ENCODE measurements at regions of chr10 and their contacts with region 1.

Region 1: DNA sequence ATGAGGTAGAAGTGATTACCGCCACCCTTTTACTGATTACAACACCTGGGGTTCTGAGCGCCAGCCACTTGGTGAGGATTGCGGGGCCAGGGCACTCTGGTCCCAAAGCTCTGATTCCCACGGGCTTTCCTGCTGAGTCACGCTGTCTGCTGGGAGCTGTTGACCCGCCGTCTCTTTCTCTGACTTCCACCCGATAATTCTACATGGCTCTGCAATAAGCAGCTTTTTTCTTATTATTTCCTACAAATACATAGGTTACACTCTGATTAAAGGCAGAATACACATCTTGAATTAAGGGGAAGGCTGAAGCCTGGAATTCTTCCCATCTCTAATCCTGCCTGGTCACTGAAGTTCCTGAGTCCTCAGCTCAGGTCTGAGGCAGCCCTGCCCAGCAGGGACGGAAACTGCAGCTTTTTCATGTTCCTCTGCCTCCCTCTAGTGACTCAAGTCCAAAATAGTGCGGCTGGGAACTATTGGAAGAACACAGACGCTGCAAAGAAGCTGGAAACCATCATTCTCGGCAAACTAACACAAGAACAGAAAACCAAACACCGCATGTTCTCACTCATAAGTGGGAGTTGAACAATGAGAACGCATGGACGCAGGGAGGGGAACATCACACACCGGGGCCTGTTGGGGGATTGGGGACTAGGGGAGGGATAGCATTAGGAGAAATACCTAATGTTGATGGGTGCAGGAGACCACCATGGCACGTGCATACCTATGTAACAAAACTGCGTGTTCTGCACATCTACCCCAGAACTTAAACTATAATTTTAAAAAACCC is 178.3 kb downstream of the PRKCQ start:
- DNase-seq: peak; percentile 85
- ATAC-seq: peak; percentile 88
- H3K4me3 ChIP-seq: peak overlapping the region in 2 of 5 experiments; percentile 5 to 12
- H3K4me3 Mint-ChIP-seq: peak overlapping the region; percentile 75
- H3K27ac ChIP-seq: no peak overlapping the region
- H3K27ac Mint-ChIP-seq: peak overlapping the region; percentile 10
- H3K4me1 ChIP-seq: peaks cover 26% of the 10 kb centered on the region in 2 donors
- H3K4me1 Mint-ChIP-seq: peaks cover 33% of the 10 kb centered on the region
- H3K27me3 ChIP-seq: peaks cover 0 to 4% (median 2%) of the 10 kb centered on the region in 4 experiments
- H3K27me3 Mint-ChIP-seq: peaks cover 22% of the 10 kb centered on the region
- CTCF ChIP-seq: peak; percentile 82

Region 2: DNA sequence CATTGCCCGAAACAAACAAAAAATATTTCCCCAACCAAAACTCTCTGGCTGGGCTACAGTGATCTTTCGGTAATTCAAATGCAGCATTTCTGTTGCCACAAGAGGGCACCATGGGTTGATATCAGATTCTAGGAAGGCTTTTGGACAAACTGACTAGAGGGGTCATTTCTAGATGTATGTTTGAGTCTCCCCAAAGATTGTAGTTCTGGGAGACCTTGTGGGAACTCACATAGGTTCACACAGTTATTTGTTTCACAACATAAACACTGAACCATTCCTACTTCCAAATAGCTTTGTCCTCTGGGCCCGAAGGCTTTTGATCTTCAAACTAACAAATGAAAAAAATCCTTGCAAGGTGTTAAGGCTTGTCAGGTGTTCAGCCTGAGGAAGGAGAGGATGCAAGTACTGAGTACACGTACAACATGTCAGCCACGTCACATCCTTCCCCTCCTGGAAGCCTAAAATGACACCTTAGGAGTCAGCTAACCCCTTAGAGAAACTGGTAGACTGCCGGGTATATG is 387.5 kb before region 1 on chr10:
- CTCF ChIA-PET with region 1: interaction called, 18 read pairs
- POLR2A ChIA-PET with region 1: no interaction called
- intact Hi-C with region 1: loop called (anchors 1 kb)
- DNase-seq: peak; percentile 79
- ATAC-seq: peak; percentile 79
- H3K4me3 ChIP-seq: no peak overlapping the region
- H3K4me3 Mint-ChIP-seq: no peak overlapping the region
- H3K27ac ChIP-seq: peak overlapping the region; percentile 34 to 57
- H3K27ac Mint-ChIP-seq: peak overlapping the region; percentile 67
- H3K4me1 ChIP-seq: peaks cover 4 to 9% of the 10 kb centered on the region in 2 donors
- H3K4me1 Mint-ChIP-seq: peaks cover 10% of the 10 kb centered on the region
- H3K27me3 ChIP-seq: no peaks in the 10 kb centered on the region
- H3K27me3 Mint-ChIP-seq: no peaks in the 10 kb centered on the region
- CTCF ChIP-seq: peak; percentile 86

Region 3: GRCh38 chr10:6108603-6109443 is 292.9 kb before region 1 on chr10:
- CTCF ChIA-PET with region 1: interaction called, 132 read pairs
- POLR2A ChIA-PET with region 1: no interaction called
- intact Hi-C with region 1: loop called (anchors 1 kb)
- DNase-seq: peak; percentile 72
- ATAC-seq: peak; percentile 80
- H3K4me3 ChIP-seq: no peak overlapping the region
- H3K4me3 Mint-ChIP-seq: no peak overlapping the region
- H3K27ac ChIP-seq: no peak overlapping the region
- H3K27ac Mint-ChIP-seq: no peak overlapping the region
- H3K4me1 ChIP-seq: peaks cover 7 to 9% of the 10 kb centered on the region in 2 donors
- H3K4me1 Mint-ChIP-seq: peaks cover 12% of the 10 kb centered on the region
- H3K27me3 ChIP-seq: no peaks in the 10 kb centered on the region
- H3K27me3 Mint-ChIP-seq: no peaks in the 10 kb centered on the region
- CTCF ChIP-seq: peak; percentile 87

Region 4: DNA sequence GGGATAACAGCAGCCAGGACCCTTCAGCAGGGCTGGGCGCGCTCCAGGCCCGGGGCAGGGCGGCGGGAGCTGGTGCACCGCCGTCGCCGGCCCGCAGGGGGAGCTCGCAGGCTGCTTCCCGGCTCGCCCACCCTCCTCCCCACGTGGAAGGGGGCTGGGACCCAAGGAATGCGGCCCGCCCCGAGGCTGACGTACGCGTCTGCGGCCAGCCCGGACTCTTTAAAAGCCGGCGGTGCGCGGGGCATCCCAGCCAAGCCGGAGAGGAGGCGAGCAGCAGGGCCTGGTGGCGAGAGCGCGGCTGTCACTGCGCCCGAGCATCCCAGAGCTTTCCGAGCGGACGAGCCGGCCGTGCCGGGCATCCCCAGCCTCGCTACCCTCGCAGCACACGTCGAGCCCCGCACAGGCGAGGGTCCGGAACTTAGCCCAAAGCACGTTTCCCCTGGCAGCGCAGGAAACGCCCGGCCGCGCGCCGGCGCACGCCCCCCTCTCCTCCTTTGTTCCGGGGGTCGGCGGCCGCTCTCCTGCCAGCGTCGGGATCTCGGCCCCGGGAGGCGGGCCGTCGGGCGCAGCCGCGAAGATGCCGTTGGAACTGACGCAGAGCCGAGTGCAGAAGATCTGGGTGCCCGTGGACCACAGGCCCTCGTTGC is 198.9 kb before region 1 on chr10 and contains the start of gene PFKFB3:
- CTCF ChIA-PET with region 1: interaction called, 325 read pairs
- POLR2A ChIA-PET with region 1: interaction called, 72 read pairs
- intact Hi-C with region 1: loop called (anchors 1 kb)
- DNase-seq: peak; percentile 90
- ATAC-seq: peak; percentile 76
- H3K4me3 ChIP-seq: peak within 1 kb of the TSS; percentile 62 to 75 (median 74)
- H3K4me3 Mint-ChIP-seq: peak within 1 kb of the TSS; percentile 97
- H3K27ac ChIP-seq: peak within 1 kb of the TSS; percentile 24 to 58
- H3K27ac Mint-ChIP-seq: peak within 1 kb of the TSS; percentile 86
- H3K4me1 ChIP-seq: peaks cover 13 to 29% of the 10 kb centered on the region in 2 donors
- H3K4me1 Mint-ChIP-seq: peaks cover 26% of the 10 kb centered on the region
- H3K27me3 ChIP-seq: no peaks in the 10 kb centered on the region
- H3K27me3 Mint-ChIP-seq: no peaks in the 10 kb centered on the region
- CTCF ChIP-seq: peak; percentile 91
- total RNA-seq, gene PFKFB3: 239 and 251 TPM in 2 replicates

Region 5: GRCh38 chr10:6244510-6244909 is 157.2 kb before region 1 on chr10:
- CTCF ChIA-PET with region 1: interaction called, 10 read pairs
- POLR2A ChIA-PET with region 1: no interaction called
- intact Hi-C with region 1: no loop called
- DNase-seq: no peak
- ATAC-seq: no peak
- H3K4me3 ChIP-seq: no peak overlapping the region
- H3K4me3 Mint-ChIP-seq: no peak overlapping the region
- H3K27ac ChIP-seq: no peak overlapping the region
- H3K27ac Mint-ChIP-seq: no peak overlapping the region
- H3K4me1 ChIP-seq: no peaks in the 10 kb centered on the region
- H3K4me1 Mint-ChIP-seq: no peaks in the 10 kb centered on the region
- H3K27me3 ChIP-seq: no peaks in the 10 kb centered on the region
- H3K27me3 Mint-ChIP-seq: no peaks in the 10 kb centered on the region
- CTCF ChIP-seq: no peak

Region 6: GRCh38 chr10:6313107-6313895 is 88.5 kb before region 1 on chr10:
- CTCF ChIA-PET with region 1: interaction called, 15 read pairs
- POLR2A ChIA-PET with region 1: interaction called, 3 read pairs
- intact Hi-C with region 1: no loop called
- DNase-seq: no peak
- ATAC-seq: no peak
- H3K4me3 ChIP-seq: no peak overlapping the region
- H3K4me3 Mint-ChIP-seq: no peak overlapping the region
- H3K27ac ChIP-seq: no peak overlapping the region
- H3K27ac Mint-ChIP-seq: no peak overlapping the region
- H3K4me1 ChIP-seq: peaks cover 7 to 17% of the 10 kb centered on the region in 2 donors
- H3K4me1 Mint-ChIP-seq: peaks cover 19% of the 10 kb centered on the region
- H3K27me3 ChIP-seq: no peaks in the 10 kb centered on the region
- H3K27me3 Mint-ChIP-seq: no peaks in the 10 kb centered on the region
- CTCF ChIP-seq: no peak

Region 7: DNA sequence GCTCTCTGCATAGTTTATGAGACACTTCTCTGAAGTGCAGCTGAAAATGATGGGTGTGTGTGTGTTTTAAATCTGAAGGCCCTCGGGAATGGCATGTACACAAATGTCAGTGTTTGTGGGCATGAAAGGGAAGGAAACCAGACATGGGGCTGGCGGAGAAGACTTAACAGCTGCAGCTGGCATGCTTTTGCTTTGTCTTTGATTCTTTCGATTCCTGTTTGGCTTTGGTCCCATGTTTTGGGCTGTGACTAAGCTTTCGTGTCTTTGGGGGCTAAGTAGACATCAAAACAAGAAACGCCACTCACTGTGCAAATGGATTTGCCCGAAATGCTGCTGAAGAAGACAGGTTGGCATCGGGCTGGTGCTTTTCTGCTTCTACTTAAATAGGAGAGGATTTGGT is 19.7 kb before region 1 on chr10:
- CTCF ChIA-PET with region 1: interaction called, 139 read pairs
- POLR2A ChIA-PET with region 1: interaction called, 3 read pairs
- intact Hi-C with region 1: loop called (anchors 1 kb)
- DNase-seq: peak; percentile 69
- ATAC-seq: peak; percentile 95
- H3K4me3 ChIP-seq: peak overlapping the region in 2 of 5 experiments; percentile 6 to 24
- H3K4me3 Mint-ChIP-seq: peak overlapping the region; percentile 86
- H3K27ac ChIP-seq: no peak overlapping the region
- H3K27ac Mint-ChIP-seq: peak overlapping the region; percentile 83
- H3K4me1 ChIP-seq: peaks cover 16 to 21% of the 10 kb centered on the region in 2 donors
- H3K4me1 Mint-ChIP-seq: peaks cover 34% of the 10 kb centered on the region
- H3K27me3 ChIP-seq: no peaks in the 10 kb centered on the region
- H3K27me3 Mint-ChIP-seq: no peaks in the 10 kb centered on the region
- CTCF ChIP-seq: no peak

Region 8: GRCh38 chr10:7027913-7028808 is 626.4 kb after region 1 on chr10:
- CTCF ChIA-PET with region 1: no interaction called
- POLR2A ChIA-PET with region 1: no interaction called
- intact Hi-C with region 1: no loop called
- DNase-seq: no peak
- ATAC-seq: no peak
- H3K4me3 ChIP-seq: no peak overlapping the region
- H3K4me3 Mint-ChIP-seq: no peak overlapping the region
- H3K27ac ChIP-seq: no peak overlapping the region
- H3K27ac Mint-ChIP-seq: no peak overlapping the region
- H3K4me1 ChIP-seq: no peaks in the 10 kb centered on the region
- H3K4me1 Mint-ChIP-seq: no peaks in the 10 kb centered on the region
- H3K27me3 ChIP-seq: no peaks in the 10 kb centered on the region
- H3K27me3 Mint-ChIP-seq: peaks cover 3% of the 10 kb centered on the region
- CTCF ChIP-seq: no peak